B cell (primary cell): ENCODE measurements at regions of chr20 and their contacts with region 1.

Region 1: DNA sequence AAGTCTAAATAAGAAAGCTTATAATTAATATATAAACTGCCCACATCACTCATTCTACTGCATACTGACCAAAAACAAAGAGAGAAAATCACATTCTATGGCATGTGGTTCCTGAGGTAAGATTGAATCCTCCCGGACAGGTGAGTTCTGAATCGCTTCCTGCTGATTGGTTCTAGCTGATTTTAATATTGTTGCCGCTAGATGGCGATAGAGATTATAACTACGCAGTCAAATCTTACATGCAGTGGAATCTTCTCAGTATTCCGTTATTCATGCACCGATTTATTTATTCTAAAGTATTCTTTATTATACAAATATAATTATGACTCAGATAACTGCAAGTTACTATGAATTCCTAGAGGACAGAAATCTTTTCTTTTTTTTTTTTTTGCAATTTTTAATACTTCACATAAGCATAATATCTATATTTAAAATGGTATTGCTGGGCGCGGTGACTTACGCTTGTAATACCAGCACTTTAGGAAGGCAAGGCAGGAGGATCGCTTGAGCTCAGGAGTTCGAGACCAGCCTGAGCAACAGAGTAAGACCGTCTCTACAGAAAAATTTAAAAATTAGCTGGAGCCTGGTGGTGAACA is 24.2 kb upstream of the TMX4 start:
- DNase-seq: peak; percentile 75
- ATAC-seq: peak; percentile 67
- H3K4me3 ChIP-seq: no peak overlapping the region
- H3K4me3 Mint-ChIP-seq: no peak overlapping the region
- H3K27ac ChIP-seq: no peak overlapping the region
- H3K27ac Mint-ChIP-seq: no peak overlapping the region
- H3K4me1 ChIP-seq: no peaks in the 10 kb centered on the region
- H3K4me1 Mint-ChIP-seq: peaks cover 2% of the 10 kb centered on the region
- H3K27me3 ChIP-seq: no peaks in the 10 kb centered on the region
- H3K27me3 Mint-ChIP-seq: peaks cover 7% of the 10 kb centered on the region
- CTCF ChIP-seq: peak; percentile 94

Region 2: DNA sequence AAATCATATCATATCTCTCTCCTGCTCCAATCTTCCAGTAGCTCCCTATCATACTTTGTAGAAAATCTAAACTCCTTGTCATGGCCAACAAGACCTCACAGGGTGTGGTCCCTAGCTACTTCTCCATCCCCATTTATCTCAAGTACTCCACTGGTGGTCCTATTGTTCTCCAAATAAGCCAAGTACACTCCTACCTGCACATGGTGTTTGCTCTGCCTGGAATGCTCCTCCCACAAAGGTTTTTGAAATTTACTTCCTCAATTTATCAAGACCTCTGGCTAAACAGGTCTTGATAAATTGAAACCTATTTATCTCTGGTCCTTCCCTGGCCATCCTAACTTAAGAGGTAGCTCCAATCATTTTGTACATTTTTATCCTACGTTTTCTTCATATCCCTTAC is 36.3 kb before region 1 on chr20:
- CTCF ChIA-PET with region 1: interaction called, 6 read pairs
- POLR2A ChIA-PET with region 1: no interaction called
- intact Hi-C with region 1: loop called (anchors 5 kb)
- DNase-seq: no peak
- ATAC-seq: no peak
- H3K4me3 ChIP-seq: no peak overlapping the region
- H3K4me3 Mint-ChIP-seq: no peak overlapping the region
- H3K27ac ChIP-seq: no peak overlapping the region
- H3K27ac Mint-ChIP-seq: no peak overlapping the region
- H3K4me1 ChIP-seq: peaks cover 3% of the 10 kb centered on the region in 2 donors
- H3K4me1 Mint-ChIP-seq: peaks cover 20% of the 10 kb centered on the region
- H3K27me3 ChIP-seq: no peaks in the 10 kb centered on the region
- H3K27me3 Mint-ChIP-seq: no peaks in the 10 kb centered on the region
- CTCF ChIP-seq: no peak

Region 3: GRCh38 chr20:8118039-8118438 is 74.3 kb after region 1 on chr20:
- CTCF ChIA-PET with region 1: no interaction called
- POLR2A ChIA-PET with region 1: no interaction called
- intact Hi-C with region 1: no loop called
- DNase-seq: no peak
- ATAC-seq: no peak
- H3K4me3 ChIP-seq: no peak overlapping the region
- H3K4me3 Mint-ChIP-seq: no peak overlapping the region
- H3K27ac ChIP-seq: no peak overlapping the region
- H3K27ac Mint-ChIP-seq: no peak overlapping the region
- H3K4me1 ChIP-seq: no peaks in the 10 kb centered on the region
- H3K4me1 Mint-ChIP-seq: no peaks in the 10 kb centered on the region
- H3K27me3 ChIP-seq: no peaks in the 10 kb centered on the region
- H3K27me3 Mint-ChIP-seq: no peaks in the 10 kb centered on the region
- CTCF ChIP-seq: no peak